PC-9 (cell line): ENCODE measurements at regions of chr7 and their contacts with region 1.

Region 1: GRCh38 chr7:40468891-40469864 is 334.4 kb downstream of the SUGCT start:
- DNase-seq: no peak
- H3K4me3 ChIP-seq: no peak overlapping the region
- H3K27ac ChIP-seq: no peak overlapping the region
- H3K4me1 ChIP-seq: no peaks in the 10 kb centered on the region
- H3K27me3 ChIP-seq: no peaks in the 10 kb centered on the region
- CTCF ChIP-seq: no peak

Region 2: DNA sequence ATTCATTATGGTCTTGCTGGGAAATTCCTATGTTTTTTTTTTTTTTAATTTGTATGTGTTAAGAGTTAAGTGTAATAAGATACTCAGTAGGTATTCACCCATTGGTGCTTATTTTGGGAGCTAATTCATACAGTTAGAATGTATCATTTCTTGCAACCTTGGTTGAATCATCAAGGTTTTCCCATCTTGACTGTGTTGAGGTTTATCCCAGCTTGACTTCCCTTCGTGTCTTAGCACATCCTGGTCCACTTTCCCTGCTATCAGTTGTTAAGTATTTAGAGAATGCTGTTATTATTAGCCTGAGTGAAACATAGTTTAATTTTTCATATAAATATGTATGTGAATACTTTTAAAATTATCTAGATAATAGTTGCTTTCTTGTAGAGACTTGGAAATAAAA is 825.0 kb before region 1 on chr7:
- CTCF ChIA-PET with region 1: no interaction called
- POLR2A ChIA-PET with region 1: no interaction called
- intact Hi-C with region 1: no loop called
- DNase-seq: no peak
- H3K4me3 ChIP-seq: no peak overlapping the region
- H3K27ac ChIP-seq: no peak overlapping the region
- H3K4me1 ChIP-seq: no peaks in the 10 kb centered on the region
- H3K27me3 ChIP-seq: no peaks in the 10 kb centered on the region
- CTCF ChIP-seq: no peak

Region 3: DNA sequence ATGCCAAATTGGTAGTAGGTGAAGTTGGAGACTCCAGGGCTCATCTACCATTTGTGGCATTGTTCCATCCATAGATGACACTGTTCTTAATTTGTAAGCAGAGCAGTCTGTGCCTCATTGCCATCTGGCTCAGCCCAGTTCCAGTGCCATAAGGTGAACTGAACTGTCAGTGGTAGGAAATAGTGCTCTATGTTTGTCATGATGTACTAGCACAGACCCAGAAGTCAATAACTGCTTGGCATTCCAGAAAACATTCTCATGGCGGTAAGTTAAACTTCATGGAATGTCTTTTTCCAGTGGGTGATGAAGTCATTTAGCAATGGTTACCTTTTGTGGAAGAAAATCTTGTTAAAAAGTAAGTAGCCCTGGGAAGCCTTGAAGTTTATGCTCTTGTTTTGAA is 31.7 kb before region 1 on chr7:
- CTCF ChIA-PET with region 1: no interaction called
- POLR2A ChIA-PET with region 1: no interaction called
- intact Hi-C with region 1: no loop called
- DNase-seq: peak; percentile 56 to 73
- H3K4me3 ChIP-seq: no peak overlapping the region
- H3K27ac ChIP-seq: peak overlapping the region; percentile 6; the same call in 1 of the 2 replicates
- H3K4me1 ChIP-seq: peaks cover 11% of the 10 kb centered on the region; the same call in 1 of the 2 replicates
- H3K27me3 ChIP-seq: no peaks in the 10 kb centered on the region
- CTCF ChIP-seq: no peak

Region 4: DNA sequence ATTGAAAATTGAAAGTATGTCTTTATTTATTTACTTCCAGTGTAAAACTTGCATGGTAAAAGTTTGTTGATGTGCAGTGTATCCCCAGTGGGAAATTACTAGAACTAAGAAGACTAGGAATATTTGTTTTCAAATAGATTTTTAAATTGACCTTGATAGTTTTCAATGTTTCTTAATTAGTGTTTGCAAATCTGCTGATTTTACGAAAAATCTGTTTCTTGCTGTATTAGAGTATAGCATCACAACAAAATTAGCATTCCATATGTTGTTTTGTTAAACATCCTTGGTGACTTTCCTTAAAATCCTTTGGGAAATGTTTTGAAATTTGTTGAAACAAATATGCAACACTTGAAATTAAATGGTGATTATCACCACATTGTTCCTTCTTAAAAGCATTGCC is 91.5 kb after region 1 on chr7:
- CTCF ChIA-PET with region 1: no interaction called
- POLR2A ChIA-PET with region 1: interaction called, 12 read pairs
- intact Hi-C with region 1: no loop called
- DNase-seq: no peak
- H3K4me3 ChIP-seq: no peak overlapping the region
- H3K27ac ChIP-seq: no peak overlapping the region
- H3K4me1 ChIP-seq: no peaks in the 10 kb centered on the region
- H3K27me3 ChIP-seq: no peaks in the 10 kb centered on the region
- CTCF ChIP-seq: no peak

Region 5: GRCh38 chr7:40644454-40645188 is 175.4 kb after region 1 on chr7:
- CTCF ChIA-PET with region 1: interaction called, 15 read pairs
- POLR2A ChIA-PET with region 1: no interaction called
- intact Hi-C with region 1: no loop called
- DNase-seq: no peak
- H3K4me3 ChIP-seq: no peak overlapping the region
- H3K27ac ChIP-seq: no peak overlapping the region
- H3K4me1 ChIP-seq: no peaks in the 10 kb centered on the region
- H3K27me3 ChIP-seq: no peaks in the 10 kb centered on the region
- CTCF ChIP-seq: no peak

Region 6: GRCh38 chr7:41224063-41224806 is 755.1 kb after region 1 on chr7:
- CTCF ChIA-PET with region 1: no interaction called
- POLR2A ChIA-PET with region 1: no interaction called
- intact Hi-C with region 1: no loop called
- DNase-seq: peak; percentile 54 to 100
- H3K4me3 ChIP-seq: no peak overlapping the region
- H3K27ac ChIP-seq: peak overlapping the region; percentile 73
- H3K4me1 ChIP-seq: peaks cover 23% of the 10 kb centered on the region
- H3K27me3 ChIP-seq: no peaks in the 10 kb centered on the region
- CTCF ChIP-seq: no peak